Activated CD4-positive, alpha-beta memory T cell treated with anti-CD3 and anti-CD28 coated beads, Interleukin-2, amount 10 ng/mL, durations not matched to agents 7 days and 5 days (primary cell): ENCODE measurements at regions of chr1 and their contacts with region 1.

Region 1: DNA sequence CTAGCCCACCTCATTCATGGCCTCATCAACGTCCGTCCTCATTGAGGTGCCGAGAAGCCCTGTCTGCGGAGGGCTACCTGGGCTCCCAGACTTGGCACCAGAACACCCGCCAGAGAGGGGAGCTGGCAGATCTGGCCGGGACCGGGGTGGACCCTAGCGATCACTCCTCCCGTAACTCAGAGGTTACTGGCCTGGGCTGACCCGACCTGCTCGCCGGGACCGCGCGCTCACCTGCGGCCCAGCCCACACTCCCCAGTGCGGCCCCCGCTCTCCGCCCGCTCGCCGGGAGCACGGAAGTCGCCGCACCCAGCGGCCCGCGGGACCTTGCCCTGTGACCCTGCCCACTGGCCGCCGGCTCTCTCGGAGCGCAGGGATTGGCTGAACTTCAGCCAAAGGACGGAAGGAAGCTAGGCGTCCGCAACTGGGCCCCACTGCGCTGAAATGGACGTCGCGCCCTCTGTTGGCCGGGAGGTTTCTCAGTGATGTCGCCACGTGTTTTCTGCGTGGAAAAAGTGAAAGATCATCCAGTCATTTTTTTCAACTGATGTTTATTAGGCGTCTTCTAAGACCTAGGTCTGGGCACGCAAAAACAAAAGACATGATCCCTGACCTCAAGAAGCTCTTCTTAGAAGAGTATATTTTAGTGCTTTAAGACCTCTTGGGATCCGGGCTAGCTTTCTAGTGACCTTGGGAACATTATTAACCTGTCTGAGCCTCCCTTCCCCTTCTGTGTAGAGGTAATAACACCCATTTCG is at the start of gene SMIM12:
- DNase-seq: peak; percentile 93
- H3K4me3 Mint-ChIP-seq: peak within 1 kb of the TSS; percentile 89
- H3K27ac Mint-ChIP-seq: peak within 1 kb of the TSS; percentile 84
- H3K4me1 Mint-ChIP-seq: peaks cover 55% of the 10 kb centered on the region
- H3K27me3 Mint-ChIP-seq: no peaks in the 10 kb centered on the region
- total RNA-seq, gene SMIM12: 45.9 to 48.5 TPM

Region 2: GRCh38 chr1:34742667-34743270 is 116.9 kb before region 1 on chr1:
- CTCF ChIA-PET with region 1: no interaction called
- POLR2A ChIA-PET with region 1: no interaction called
- DNase-seq: peak; percentile 79
- H3K4me3 Mint-ChIP-seq: no peak overlapping the region
- H3K27ac Mint-ChIP-seq: no peak overlapping the region
- H3K4me1 Mint-ChIP-seq: no peaks in the 10 kb centered on the region
- H3K27me3 Mint-ChIP-seq: peaks cover 7% of the 10 kb centered on the region

Region 3: GRCh38 chr1:34816778-34817177 is 42.8 kb before region 1 on chr1:
- CTCF ChIA-PET with region 1: no interaction called
- POLR2A ChIA-PET with region 1: no interaction called
- DNase-seq: no peak
- H3K4me3 Mint-ChIP-seq: no peak overlapping the region
- H3K27ac Mint-ChIP-seq: no peak overlapping the region
- H3K4me1 Mint-ChIP-seq: no peaks in the 10 kb centered on the region
- H3K27me3 Mint-ChIP-seq: peaks cover 4% of the 10 kb centered on the region

Region 4: DNA sequence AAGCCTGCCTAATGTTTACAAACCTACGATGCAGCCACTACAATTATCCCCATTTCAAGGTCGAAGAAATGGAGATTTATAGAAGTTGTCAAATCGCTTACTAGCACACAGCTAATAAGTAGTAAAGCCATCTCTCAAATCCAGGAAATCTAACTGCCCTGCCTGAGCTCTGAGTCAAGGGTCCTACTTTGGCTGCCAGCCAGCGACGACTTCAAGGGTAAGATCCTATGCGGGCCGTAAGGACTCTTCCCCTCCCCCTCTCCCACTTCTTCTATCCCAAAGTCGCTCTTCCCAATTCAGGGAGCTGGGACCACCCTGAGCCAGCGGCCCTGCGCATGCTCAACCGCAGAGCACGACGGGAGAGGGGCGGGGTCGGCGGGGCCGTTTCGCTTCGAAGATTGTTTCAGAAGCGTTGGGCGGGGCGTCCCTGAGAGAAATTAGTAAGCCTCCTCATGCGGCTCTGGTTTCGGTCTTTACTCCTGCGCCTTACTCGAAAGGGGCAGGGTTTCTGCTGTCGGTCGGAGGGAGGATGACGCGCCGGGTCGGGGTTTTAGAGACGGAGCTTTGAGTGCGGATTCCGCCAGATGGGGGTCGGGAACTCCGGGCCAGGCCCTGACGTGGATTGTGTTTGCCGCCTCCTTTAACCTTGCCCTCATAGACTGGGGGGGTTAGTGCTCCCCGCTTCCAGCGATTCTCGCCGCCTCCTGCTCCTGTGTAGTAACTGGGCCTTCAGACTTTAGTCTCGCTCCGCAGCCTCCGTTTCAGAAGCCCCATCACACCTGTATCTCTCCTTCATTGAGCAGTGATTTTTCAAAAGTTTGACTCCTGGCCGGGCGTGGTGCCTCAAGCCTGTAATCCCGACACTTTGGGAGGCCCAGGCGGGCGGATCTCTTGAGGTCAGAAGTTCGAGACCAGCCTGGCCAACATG is 219.6 kb after region 1 on chr1 and contains the start of gene ZMYM1:
- CTCF ChIA-PET with region 1: no interaction called
- POLR2A ChIA-PET with region 1: interaction called, 11 read pairs
- DNase-seq: peak; percentile 87
- H3K4me3 Mint-ChIP-seq: peak within 1 kb of the TSS; percentile 99
- H3K27ac Mint-ChIP-seq: peak within 1 kb of the TSS; percentile 99
- H3K4me1 Mint-ChIP-seq: peaks cover 41% of the 10 kb centered on the region
- H3K27me3 Mint-ChIP-seq: no peaks in the 10 kb centered on the region
- total RNA-seq, gene ZMYM1: 9.7 to 11.7 TPM